Caco-2 (cell line): ENCODE measurements at regions of chr20 and their contacts with region 1.

Region 1: DNA sequence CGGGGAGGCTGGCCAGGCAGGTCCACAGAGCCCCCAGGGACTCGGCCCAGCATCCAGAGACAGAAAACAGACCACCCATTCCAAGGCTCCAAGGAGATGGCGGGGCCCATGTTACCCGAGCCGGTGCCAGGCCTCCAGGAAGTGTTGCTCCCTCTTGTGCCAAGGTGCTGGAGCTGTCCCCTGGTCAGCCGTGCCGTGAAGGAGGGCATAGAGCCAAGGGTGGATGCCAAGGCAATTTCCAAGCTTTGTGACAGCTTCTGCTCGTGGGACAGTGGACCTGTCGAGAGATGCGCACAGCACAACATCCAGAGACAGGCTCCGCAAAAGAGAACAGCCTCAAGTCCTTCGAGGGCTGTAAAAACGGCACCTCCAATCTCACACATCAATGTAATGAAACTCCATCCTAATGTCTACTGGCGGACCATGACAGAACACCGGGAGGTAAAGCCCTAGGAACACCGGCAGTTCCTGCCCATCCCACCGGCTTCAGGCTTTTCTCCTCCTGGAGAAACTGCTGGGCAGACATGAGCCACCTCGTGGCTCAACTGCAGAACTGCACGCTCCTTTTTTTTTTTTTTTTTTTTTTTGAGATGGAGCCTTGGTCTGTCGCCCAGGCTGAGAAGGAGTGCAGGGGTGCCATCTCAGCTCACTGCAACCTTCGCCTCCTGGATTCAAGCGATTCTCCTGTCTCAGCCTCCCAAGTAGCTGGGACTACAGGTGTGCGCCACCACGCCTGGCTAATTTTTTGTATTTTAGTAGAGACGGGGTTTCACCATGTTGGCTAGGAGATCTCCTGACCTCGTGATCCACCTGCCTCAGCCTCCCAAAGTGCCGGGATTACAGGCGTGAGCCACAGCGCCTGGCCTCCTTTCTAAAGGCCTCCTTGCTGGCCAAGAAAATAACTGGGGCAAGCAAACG is 30.9 kb upstream of the AVP start:
- DNase-seq: peak; percentile 55 to 62
- H3K4me3 ChIP-seq: no peak overlapping the region
- H3K4me3 Mint-ChIP-seq: no peak overlapping the region
- H3K27ac Mint-ChIP-seq: no peak overlapping the region
- H3K4me1 ChIP-seq: no peaks in the 10 kb centered on the region
- H3K4me1 Mint-ChIP-seq: no peaks in the 10 kb centered on the region
- H3K27me3 ChIP-seq: no peaks in the 10 kb centered on the region
- H3K27me3 Mint-ChIP-seq: no peaks in the 10 kb centered on the region
- CTCF ChIP-seq: peak; percentile 76 to 89

Region 2: GRCh38 chr20:3051385-3052019 is 63.9 kb before region 1 on chr20:
- CTCF ChIA-PET with region 1: interaction called, 3 read pairs
- POLR2A ChIA-PET with region 1: no interaction called
- intact Hi-C with region 1: loop called (anchors 5 kb)
- DNase-seq: no peak
- H3K4me3 ChIP-seq: no peak overlapping the region
- H3K4me3 Mint-ChIP-seq: no peak overlapping the region
- H3K27ac Mint-ChIP-seq: no peak overlapping the region
- H3K4me1 ChIP-seq: peaks cover 7% of the 10 kb centered on the region; the same call in 1 of the 2 replicates
- H3K4me1 Mint-ChIP-seq: peaks cover 6% of the 10 kb centered on the region
- H3K27me3 ChIP-seq: no peaks in the 10 kb centered on the region
- H3K27me3 Mint-ChIP-seq: no peaks in the 10 kb centered on the region
- CTCF ChIP-seq: no peak

Region 3: GRCh38 chr20:3077618-3078134 is 37.8 kb before region 1 on chr20:
- CTCF ChIA-PET with region 1: no interaction called
- POLR2A ChIA-PET with region 1: no interaction called
- intact Hi-C with region 1: loop called (anchors 5 kb)
- DNase-seq: no peak
- H3K4me3 ChIP-seq: no peak overlapping the region
- H3K4me3 Mint-ChIP-seq: no peak overlapping the region
- H3K27ac Mint-ChIP-seq: no peak overlapping the region
- H3K4me1 ChIP-seq: no peaks in the 10 kb centered on the region
- H3K4me1 Mint-ChIP-seq: peaks cover 7% of the 10 kb centered on the region
- H3K27me3 ChIP-seq: no peaks in the 10 kb centered on the region
- H3K27me3 Mint-ChIP-seq: peaks cover 5% of the 10 kb centered on the region
- CTCF ChIP-seq: no peak

Region 4: GRCh38 chr20:3100480-3100879 is 15.0 kb before region 1 on chr20:
- CTCF ChIA-PET with region 1: no interaction called
- POLR2A ChIA-PET with region 1: no interaction called
- intact Hi-C with region 1: no loop called
- DNase-seq: no peak
- H3K4me3 ChIP-seq: no peak overlapping the region
- H3K4me3 Mint-ChIP-seq: no peak overlapping the region
- H3K27ac Mint-ChIP-seq: no peak overlapping the region
- H3K4me1 ChIP-seq: 0 out of 2 replicates have a peak, but pooled peaks cover 4% of the 10 kb centered on the region
- H3K4me1 Mint-ChIP-seq: no peaks in the 10 kb centered on the region
- H3K27me3 ChIP-seq: no peaks in the 10 kb centered on the region
- H3K27me3 Mint-ChIP-seq: no peaks in the 10 kb centered on the region
- CTCF ChIP-seq: no peak